H1 (cell line): ENCODE measurements at regions of chr13 and their contacts with region 1.

Region 1: DNA sequence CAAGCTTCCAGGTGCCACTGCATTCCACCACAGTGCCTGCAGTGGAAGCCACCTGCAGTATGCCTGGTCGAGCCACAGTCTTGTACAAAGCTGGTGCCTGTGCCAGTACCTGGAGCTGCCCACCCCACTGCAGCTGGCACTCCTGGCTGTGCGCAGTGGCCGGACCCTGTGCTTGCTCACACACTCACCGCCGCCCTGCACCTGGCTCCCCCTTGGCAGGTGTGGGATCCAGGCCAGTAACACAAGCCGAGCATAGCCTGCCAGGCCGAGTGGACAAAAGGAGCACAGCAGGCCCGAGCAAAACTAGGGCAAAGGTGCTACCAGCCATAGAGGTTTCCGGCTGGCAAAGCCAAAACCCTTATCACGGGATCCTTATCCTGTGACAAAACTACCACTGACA is 18.5 kb downstream of the UGGT2 start:
- DNase-seq: no peak
- H3K4me3 ChIP-seq: no peak overlapping the region
- H3K27ac ChIP-seq: no peak overlapping the region
- H3K4me1 ChIP-seq: peaks cover 0 to 14% (median 2%) of the 10 kb centered on the region in 4 experiments; a peak in 1 of 7 replicates
- H3K27me3 ChIP-seq: no peaks in the 10 kb centered on the region
- CTCF ChIP-seq: no peak
- EP300 ChIP-seq: no peak
- POLR2A ChIP-seq: no peak
- RAD21 ChIP-seq: no peak

Region 2: GRCh38 chr13:95239283-95239682 is 795.4 kb before region 1 on chr13:
- CTCF ChIA-PET with region 1: no interaction called
- POLR2A ChIA-PET with region 1: no interaction called
- DNase-seq: no peak
- H3K4me3 ChIP-seq: no peak overlapping the region
- H3K27ac ChIP-seq: no peak overlapping the region
- H3K4me1 ChIP-seq: no peaks in the 10 kb centered on the region
- H3K27me3 ChIP-seq: no peaks in the 10 kb centered on the region
- CTCF ChIP-seq: no peak
- EP300 ChIP-seq: no peak
- POLR2A ChIP-seq: no peak
- RAD21 ChIP-seq: no peak

Region 3: GRCh38 chr13:96020155-96020575 is 14.5 kb before region 1 on chr13:
- CTCF ChIA-PET with region 1: interaction called, 10 read pairs
- POLR2A ChIA-PET with region 1: interaction called, 3 read pairs
- DNase-seq: no peak
- H3K4me3 ChIP-seq: no peak overlapping the region
- H3K27ac ChIP-seq: no peak overlapping the region
- H3K4me1 ChIP-seq: peaks cover 0 to 2% (median under 1%) of the 10 kb centered on the region in 4 experiments; a peak in 3 of 7 replicates
- H3K27me3 ChIP-seq: no peaks in the 10 kb centered on the region
- CTCF ChIP-seq: peak in 2 of 3 experiments; percentile 47 to 61; a peak in 3 of 4 replicates
- EP300 ChIP-seq: no peak
- POLR2A ChIP-seq: no peak
- RAD21 ChIP-seq: peak; percentile 82 to 83